ENCODE measurements at regions of chr7 and their contacts with region 1.

Region 1: DNA sequence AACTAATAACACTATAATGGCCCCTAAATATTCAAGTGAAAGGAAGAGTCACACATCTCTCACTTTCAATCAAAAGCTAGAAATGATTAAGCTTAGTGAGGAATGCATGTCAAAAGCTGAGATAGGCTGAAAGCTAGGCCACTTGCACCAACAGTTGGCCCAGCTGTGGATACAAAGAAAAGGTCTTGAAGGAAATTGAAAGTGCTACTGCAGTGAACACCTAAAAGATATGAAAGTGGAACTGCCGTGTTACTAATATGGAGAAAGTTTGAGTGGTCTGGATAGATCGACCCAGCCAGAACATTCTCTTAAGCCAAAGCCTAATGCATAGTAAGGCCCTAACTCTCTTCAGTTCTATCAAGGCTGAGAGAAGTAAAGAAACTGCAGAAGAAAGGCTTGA is 12.1 kb upstream of the SNX13 start:
- DNase-seq: peak; percentile 63
- H3K4me3 Mint-ChIP-seq: peak overlapping the region; percentile 28
- H3K27ac Mint-ChIP-seq: peak overlapping the region; percentile 44
- H3K4me1 Mint-ChIP-seq: peaks cover 23% of the 10 kb centered on the region
- H3K27me3 Mint-ChIP-seq: peaks cover 3% of the 10 kb centered on the region

Region 2: DNA sequence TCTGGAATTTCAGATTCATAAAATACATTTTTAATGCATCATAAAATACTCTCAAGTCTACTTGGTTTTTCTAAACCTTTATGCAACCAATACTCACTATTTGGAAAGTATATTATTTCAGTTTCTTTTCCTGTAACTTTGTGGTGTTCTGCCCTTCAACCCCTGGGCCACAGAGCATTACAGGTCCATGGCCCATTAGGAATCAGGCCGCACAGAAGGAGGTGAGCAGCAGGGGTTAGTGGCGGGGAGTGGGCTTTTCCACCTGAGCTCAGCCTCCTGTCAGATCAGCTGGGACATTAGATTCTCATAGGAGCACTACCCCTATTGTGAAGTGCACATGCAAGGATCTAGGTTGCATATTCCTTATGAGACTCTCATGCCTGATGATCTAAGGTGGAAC is 21.8 kb before region 1 on chr7:
- CTCF ChIA-PET with region 1: no interaction called
- POLR2A ChIA-PET with region 1: no interaction called
- intact Hi-C with region 1: loop called (anchors 1 kb)
- DNase-seq: no peak
- H3K4me3 Mint-ChIP-seq: no peak overlapping the region
- H3K27ac Mint-ChIP-seq: no peak overlapping the region
- H3K4me1 Mint-ChIP-seq: peaks cover 61% of the 10 kb centered on the region
- H3K27me3 Mint-ChIP-seq: no peaks in the 10 kb centered on the region

Region 3: DNA sequence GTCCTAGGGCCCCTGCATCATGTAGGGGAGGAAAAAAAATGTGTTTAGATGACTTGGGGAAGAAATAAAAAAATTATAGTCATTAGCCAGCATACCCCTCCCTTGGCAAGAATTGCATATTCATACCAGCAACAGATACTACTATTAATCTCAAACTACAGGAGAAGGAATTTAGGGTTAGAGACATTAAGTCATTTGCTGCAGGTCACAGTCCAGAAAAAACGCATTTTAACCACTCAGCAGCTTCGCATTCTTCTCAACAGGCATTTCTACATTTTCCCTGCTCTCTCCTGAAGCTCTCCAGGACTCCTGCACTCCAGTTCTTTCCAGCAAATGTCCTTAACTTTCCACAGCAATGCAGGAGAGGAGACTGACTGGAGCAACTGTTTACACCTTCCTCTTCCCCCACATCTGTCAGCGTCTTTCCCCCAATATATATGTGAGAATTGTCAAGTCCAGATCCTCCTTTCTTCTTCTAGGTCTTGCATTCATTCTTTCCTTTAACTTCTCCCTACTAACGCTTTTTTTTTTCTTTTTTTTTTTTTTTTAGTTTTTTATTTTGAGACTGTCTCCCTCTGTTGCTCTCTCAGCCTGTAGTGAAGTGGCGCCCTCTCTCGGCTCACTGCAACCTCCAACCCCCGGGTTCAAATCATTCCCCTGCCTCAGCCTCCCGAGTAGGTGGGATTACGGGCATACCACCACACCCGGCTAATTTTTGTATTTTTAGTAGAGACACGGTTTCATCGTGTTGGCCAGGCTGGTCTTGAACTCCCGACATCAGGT is 39.7 kb after region 1 on chr7:
- CTCF ChIA-PET with region 1: no interaction called
- POLR2A ChIA-PET with region 1: interaction called, 3 read pairs
- intact Hi-C with region 1: loop called (anchors 5 kb)
- DNase-seq: peak; percentile 47
- H3K4me3 Mint-ChIP-seq: no peak overlapping the region
- H3K27ac Mint-ChIP-seq: no peak overlapping the region
- H3K4me1 Mint-ChIP-seq: peaks cover 13% of the 10 kb centered on the region
- H3K27me3 Mint-ChIP-seq: peaks cover 10% of the 10 kb centered on the region

Region 4: GRCh38 chr7:18345641-18346234 is 393.4 kb after region 1 on chr7:
- CTCF ChIA-PET with region 1: no interaction called
- POLR2A ChIA-PET with region 1: no interaction called
- intact Hi-C with region 1: no loop called
- DNase-seq: peak; percentile 20
- H3K4me3 Mint-ChIP-seq: no peak overlapping the region
- H3K27ac Mint-ChIP-seq: no peak overlapping the region
- H3K4me1 Mint-ChIP-seq: no peaks in the 10 kb centered on the region
- H3K27me3 Mint-ChIP-seq: peaks cover 5% of the 10 kb centered on the region

Measured in activated CD4-positive, alpha-beta memory T cell treated with anti-CD3 and anti-CD28 coated beads for 36 hours (primary cell).